G401 (cell line): ENCODE measurements at regions of chr17 and their contacts with region 1.

Region 1: DNA sequence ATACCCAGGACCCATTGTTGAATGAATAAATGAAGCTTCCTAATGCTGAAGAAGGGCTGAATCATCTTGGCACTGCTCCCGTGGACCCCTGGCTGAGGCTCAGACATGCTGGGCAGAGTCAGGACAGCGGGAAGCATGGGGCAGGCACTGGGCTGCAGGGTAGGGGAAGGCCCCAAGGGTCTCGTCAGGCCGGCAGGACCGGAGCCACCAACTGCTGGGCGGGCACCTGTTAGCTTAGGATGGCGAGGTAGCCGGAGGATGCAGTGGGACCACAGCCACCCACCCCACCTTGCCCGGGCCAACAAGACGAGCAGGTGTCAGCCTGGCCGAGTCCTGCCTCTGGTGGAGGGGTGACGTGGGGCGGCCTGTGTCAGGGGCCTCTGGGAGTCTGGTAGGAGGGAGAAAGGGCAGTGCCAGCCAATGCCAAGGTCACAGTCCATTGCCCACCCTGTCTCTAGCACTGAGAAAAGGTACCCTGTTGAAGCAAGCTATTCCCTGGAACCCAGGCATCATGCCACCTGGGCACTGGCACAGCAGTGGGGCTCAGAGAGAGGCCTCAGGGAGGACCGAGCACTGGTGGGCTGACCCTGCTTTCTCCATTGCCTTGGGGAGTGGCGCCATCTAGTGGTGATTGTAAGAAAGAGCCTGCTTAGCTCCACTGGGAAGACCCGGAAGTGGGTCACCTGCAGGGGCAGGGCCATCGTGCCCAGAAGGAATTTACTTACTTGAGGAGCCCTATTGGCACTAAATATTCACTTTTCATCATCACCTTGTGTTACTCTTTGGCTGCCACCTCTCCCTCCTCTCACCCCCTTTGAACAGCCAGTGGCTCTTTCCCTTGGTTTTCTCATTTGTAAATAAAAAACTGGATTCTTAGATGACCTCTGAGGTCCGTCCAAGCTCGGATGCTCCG is 3.0 kb upstream of the DLX3 start:
- DNase-seq: peak; percentile 90

Region 2: GRCh38 chr17:49901460-49902331 is 96.4 kb before region 1 on chr17:
- in situ Hi-C with region 1: loop called (anchors 5 kb)
- DNase-seq: no peak